GM10248 (cell line): ENCODE measurements at regions of chr19 and their contacts with region 1.

Region 1: GRCh38 chr19:7355151-7355820 is 6.5 kb downstream of the ARHGEF18 start:
- DNase-seq: no peak
- CTCF ChIP-seq: no peak

Region 2: GRCh38 chr19:7101498-7102253 is 253.6 kb before region 1 on chr19:
- CTCF ChIA-PET with region 1: interaction called, 16 read pairs
- POLR2A ChIA-PET with region 1: no interaction called
- DNase-seq: no peak
- CTCF ChIP-seq: no peak

Region 3: GRCh38 chr19:7182489-7182888 is 172.8 kb before region 1 on chr19:
- CTCF ChIA-PET with region 1: no interaction called
- POLR2A ChIA-PET with region 1: no interaction called
- DNase-seq: no peak
- CTCF ChIP-seq: no peak

Region 4: GRCh38 chr19:7376151-7376852 is 21.0 kb after region 1 on chr19:
- CTCF ChIA-PET with region 1: interaction called, 11 read pairs
- POLR2A ChIA-PET with region 1: no interaction called
- DNase-seq: no peak
- CTCF ChIP-seq: no peak

Region 5: DNA sequence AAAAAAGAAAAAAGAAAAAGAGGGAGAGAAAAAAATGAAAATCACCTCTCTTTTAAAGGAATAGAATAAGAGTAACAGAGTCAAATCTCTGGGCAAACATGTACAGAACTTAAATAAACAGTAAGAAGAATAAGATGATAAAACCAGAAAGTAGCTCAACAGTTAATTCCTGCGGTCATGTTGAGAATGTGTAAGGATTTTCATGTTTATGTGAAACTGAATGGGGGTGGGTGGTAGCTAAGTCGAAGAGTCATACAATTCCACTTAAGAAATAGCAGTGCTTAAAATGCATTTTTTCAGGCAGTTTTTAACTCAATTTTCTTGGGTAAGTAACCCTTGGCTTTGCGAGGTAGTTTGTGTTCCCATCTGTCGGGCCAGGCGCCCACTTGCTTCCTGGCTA is 72.7 kb after region 1 on chr19:
- CTCF ChIA-PET with region 1: no interaction called
- POLR2A ChIA-PET with region 1: no interaction called
- DNase-seq: no peak
- CTCF ChIP-seq: no peak